A549 (cell line): ENCODE measurements at regions of chr10 and their contacts with region 1.

Region 1: GRCh38 chr10:119199231-119199992 is 8.0 kb upstream of the GRK5 start:
- DNase-seq: peak; percentile 68 to 87
- ATAC-seq: peak; percentile 96 to 98
- H3K4me3 ChIP-seq: no peak overlapping the region
- H3K27ac ChIP-seq: no peak overlapping the region
- H3K4me1 ChIP-seq: no peaks in the 10 kb centered on the region; the same call in 2 of the 3 replicates
- CTCF ChIP-seq: peak; percentile 89
- EP300 ChIP-seq: no peak
- POLR2A ChIP-seq: no peak
- RAD21 ChIP-seq: peak; percentile 95 to 98

Region 2: DNA sequence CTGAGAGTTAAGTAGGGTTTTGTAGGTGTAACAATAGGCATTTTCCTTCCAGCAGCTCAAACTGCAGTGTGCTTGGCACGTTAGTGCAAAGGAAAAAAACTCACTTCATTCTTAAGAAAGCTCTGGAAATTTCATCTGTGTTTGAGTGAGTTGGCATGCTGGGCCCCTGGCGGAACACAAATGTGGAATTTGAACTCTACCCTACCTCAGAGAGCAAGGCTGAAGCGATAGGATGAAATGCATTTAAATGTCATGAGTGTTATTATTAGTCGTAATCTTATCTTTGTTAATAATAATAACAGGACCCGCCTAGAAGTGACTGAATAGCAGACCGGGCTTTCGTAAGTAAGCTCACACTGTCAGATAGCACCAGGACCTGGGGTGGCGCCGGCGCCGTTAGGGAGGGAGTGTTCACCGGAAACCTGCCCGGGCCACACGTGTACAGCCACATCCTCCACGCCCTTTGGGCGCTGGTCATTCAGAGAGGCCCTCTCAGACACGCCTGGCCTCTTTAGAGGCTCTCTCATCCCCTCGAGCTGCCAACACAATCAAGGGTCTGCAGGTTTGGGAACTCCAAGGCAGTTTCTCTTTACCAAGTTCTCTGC is 71.5 kb after region 1 on chr10:
- CTCF ChIA-PET with region 1: interaction called, 18 read pairs
- POLR2A ChIA-PET with region 1: no interaction called
- DNase-seq: peak; percentile 50 to 72
- ATAC-seq: peak; percentile 87 to 90
- H3K4me3 ChIP-seq: peak overlapping the region; percentile 19; the same call in 1 of the 3 replicates
- H3K27ac ChIP-seq: peak overlapping the region; percentile 76 to 83
- H3K4me1 ChIP-seq: peaks cover 30% of the 10 kb centered on the region
- CTCF ChIP-seq: no peak
- EP300 ChIP-seq: no peak
- POLR2A ChIP-seq: no peak
- RAD21 ChIP-seq: no peak

Region 3: GRCh38 chr10:119325131-119325530 is 125.7 kb after region 1 on chr10:
- CTCF ChIA-PET with region 1: no interaction called
- POLR2A ChIA-PET with region 1: no interaction called
- DNase-seq: no peak
- ATAC-seq: no peak
- H3K4me3 ChIP-seq: no peak overlapping the region
- H3K27ac ChIP-seq: peak overlapping the region in 1 of 2 experiments; percentile 66; a peak in 3 of 6 replicates
- H3K4me1 ChIP-seq: peaks cover 22% of the 10 kb centered on the region
- CTCF ChIP-seq: no peak
- EP300 ChIP-seq: no peak
- POLR2A ChIP-seq: no peak
- RAD21 ChIP-seq: no peak

Region 4: GRCh38 chr10:119428789-119429188 is 229.4 kb after region 1 on chr10:
- CTCF ChIA-PET with region 1: interaction called, 12 read pairs
- POLR2A ChIA-PET with region 1: no interaction called
- DNase-seq: no peak
- ATAC-seq: no peak
- H3K4me3 ChIP-seq: no peak overlapping the region
- H3K27ac ChIP-seq: no peak overlapping the region
- H3K4me1 ChIP-seq: no peaks in the 10 kb centered on the region
- CTCF ChIP-seq: no peak
- EP300 ChIP-seq: no peak
- POLR2A ChIP-seq: no peak
- RAD21 ChIP-seq: no peak

Region 5: GRCh38 chr10:119457966-119458766 is 258.8 kb after region 1 on chr10:
- CTCF ChIA-PET with region 1: interaction called, 186 read pairs
- POLR2A ChIA-PET with region 1: no interaction called
- DNase-seq: no peak
- ATAC-seq: no peak
- H3K4me3 ChIP-seq: no peak overlapping the region
- H3K27ac ChIP-seq: no peak overlapping the region
- H3K4me1 ChIP-seq: no peaks in the 10 kb centered on the region
- CTCF ChIP-seq: no peak
- EP300 ChIP-seq: no peak
- POLR2A ChIP-seq: no peak
- RAD21 ChIP-seq: no peak

Region 6: DNA sequence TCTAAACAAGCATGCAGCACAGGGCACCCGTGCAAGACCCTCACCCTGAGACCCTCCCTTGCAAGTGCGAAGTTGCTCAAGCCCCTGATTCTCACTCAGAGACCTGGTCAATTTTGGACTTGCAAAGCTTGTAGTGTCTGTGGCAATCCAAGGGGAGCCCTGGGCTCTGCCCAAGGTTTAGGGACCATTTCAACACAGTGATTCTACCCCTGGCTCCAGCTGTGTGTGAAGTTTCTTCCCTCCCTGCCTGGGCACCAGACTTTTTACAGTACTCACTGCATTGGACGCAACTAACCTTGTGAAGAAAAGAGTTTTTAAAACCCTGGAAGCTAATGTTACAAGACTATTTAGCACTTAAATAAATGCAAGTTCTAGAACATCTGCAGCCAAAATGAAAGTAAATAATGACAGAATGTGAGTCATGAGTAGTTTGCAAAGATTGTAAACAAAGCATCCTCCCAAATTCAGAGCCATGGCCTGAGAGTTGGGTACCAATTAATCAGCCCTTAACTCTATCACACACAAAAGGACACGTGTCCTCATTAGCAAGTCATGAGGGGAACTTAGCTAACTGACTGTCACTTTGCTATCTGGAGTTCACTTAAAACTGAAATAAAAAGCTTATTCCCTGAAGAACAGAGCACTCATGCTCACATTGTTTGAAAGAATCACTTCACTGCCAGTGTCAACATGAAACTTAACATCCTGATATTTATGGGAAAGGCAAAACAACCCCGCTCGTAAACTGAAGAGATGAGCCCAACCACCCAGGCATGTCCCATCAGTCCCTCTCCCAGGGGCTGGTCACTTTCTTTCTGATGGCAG is 295.0 kb after region 1 on chr10:
- CTCF ChIA-PET with region 1: interaction called, 107 read pairs
- POLR2A ChIA-PET with region 1: interaction called, 5 read pairs
- DNase-seq: no peak
- ATAC-seq: no peak
- H3K4me3 ChIP-seq: no peak overlapping the region
- H3K27ac ChIP-seq: no peak overlapping the region
- H3K4me1 ChIP-seq: peaks cover 18% of the 10 kb centered on the region
- CTCF ChIP-seq: no peak
- EP300 ChIP-seq: no peak
- POLR2A ChIP-seq: no peak
- RAD21 ChIP-seq: no peak